ENCODE measurements at regions of chr1 and their contacts with region 1.

Region 1: DNA sequence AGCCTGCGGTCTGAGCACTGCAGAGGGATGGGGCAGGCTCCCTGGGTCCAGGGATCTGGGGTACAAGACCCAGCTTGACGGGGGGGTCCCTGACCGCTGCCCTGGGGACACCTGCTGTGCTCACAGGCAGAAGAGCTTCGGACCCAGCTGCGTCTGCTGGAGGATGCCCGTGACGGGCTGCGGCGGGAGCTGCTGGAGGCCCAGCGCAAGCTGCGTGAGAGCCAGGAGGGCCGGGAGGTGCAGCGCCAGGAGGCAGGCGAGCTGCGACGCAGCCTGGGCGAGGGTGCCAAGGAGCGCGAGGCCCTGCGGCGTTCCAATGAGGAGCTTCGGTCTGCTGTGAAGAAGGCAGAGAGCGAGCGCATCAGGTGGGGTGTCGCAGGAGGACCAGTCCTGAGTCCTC is 25.2 kb downstream of the MFAP2 start:
- DNase-seq: no peak
- ATAC-seq: no peak
- H3K4me3 ChIP-seq: no peak overlapping the region
- H3K27ac ChIP-seq: no peak overlapping the region
- H3K4me1 ChIP-seq: peaks cover 9% of the 10 kb centered on the region
- H3K27me3 ChIP-seq: no peaks in the 10 kb centered on the region
- CTCF ChIP-seq: no peak

Region 2: DNA sequence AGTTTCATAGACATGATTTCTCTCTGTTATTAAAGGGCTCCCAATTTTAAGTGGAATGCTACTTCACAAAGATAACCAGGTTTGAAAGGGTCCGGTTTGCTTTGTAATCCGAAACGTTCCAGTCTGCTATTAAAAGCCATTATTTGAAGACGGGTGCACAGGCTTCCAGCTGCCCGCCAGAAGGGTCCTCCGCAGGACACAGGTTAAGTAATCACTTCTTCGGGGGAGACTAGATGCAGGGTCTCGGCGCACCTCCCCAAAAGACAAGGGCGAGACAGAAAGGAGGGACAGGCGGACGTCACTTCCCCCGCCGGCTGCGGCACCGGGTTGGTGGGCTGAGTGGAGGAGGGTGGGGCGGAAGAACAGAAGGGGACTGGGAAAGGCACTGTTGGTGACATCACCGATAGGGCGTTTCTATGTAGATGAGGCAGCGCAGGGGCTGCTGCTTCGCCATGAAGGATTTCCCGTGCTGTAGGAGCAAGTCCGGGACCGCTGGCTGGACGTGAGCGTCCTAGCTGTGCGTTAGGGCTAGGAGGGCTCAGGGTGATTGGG is 50.5 kb before region 1 on chr1:
- CTCF ChIA-PET with region 1: no interaction called
- POLR2A ChIA-PET with region 1: no interaction called
- intact Hi-C with region 1: no loop called
- DNase-seq: peak; percentile 95
- ATAC-seq: peak; percentile 96
- H3K4me3 ChIP-seq: peak overlapping the region; percentile 83
- H3K27ac ChIP-seq: peak overlapping the region; percentile 97
- H3K4me1 ChIP-seq: peaks cover 16% of the 10 kb centered on the region; the same call in 1 of the 2 replicates
- H3K27me3 ChIP-seq: no peaks in the 10 kb centered on the region
- CTCF ChIP-seq: no peak

Region 3: DNA sequence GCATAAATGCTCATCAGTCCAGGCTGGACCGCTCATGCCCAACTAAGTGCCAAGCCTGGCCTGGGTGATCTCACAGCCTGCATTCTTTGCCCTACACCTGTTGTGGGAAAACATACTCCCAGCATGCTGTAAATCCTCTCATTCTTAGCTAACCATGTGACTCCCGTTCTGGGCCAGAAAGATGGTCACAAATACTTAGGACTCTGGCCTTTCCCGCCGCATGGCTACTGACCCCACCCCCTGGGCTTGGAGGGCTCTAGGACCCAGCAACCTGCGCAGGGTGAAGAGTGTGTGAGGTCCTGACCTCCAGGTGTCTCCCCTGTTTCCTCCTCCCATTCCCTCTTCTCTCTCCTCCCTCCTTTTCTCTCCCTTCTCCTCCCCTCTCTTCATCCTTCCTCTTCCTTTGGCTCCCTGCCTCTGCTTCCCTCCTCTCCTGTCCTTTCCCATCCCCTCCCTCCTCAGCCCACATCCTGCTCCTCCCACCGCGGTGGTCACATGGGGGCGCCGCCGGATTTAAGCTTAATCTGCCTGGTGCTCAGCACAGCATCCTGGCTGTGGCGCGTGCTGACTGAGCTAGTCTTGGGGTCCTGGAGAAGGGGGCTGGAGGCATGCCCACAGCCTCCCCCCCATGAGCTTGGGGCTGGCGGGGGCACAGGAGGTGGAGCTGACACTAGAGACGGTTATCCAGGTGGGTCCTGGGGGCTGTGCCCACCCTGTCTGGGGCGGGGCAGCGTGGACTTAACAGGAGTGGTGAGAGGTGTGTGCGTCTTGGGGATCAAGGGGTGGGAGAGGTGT is 33.6 kb before region 1 on chr1 and contains the start of gene CROCC:
- CTCF ChIA-PET with region 1: no interaction called
- POLR2A ChIA-PET with region 1: no interaction called
- intact Hi-C with region 1: no loop called
- DNase-seq: no peak
- ATAC-seq: no peak
- H3K4me3 ChIP-seq: no peak within 1 kb of the TSS
- H3K27ac ChIP-seq: no peak within 1 kb of the TSS
- H3K4me1 ChIP-seq: no peaks in the 10 kb centered on the region
- H3K27me3 ChIP-seq: no peaks in the 10 kb centered on the region
- CTCF ChIP-seq: no peak
- total RNA-seq, gene CROCC: 24.6 and 51.6 TPM in 2 replicates

Region 4: GRCh38 chr1:17028662-17029188 is 73.5 kb after region 1 on chr1:
- CTCF ChIA-PET with region 1: interaction called, 10 read pairs
- POLR2A ChIA-PET with region 1: no interaction called
- intact Hi-C with region 1: no loop called
- DNase-seq: no peak
- ATAC-seq: no peak
- H3K4me3 ChIP-seq: no peak overlapping the region
- H3K27ac ChIP-seq: no peak overlapping the region
- H3K4me1 ChIP-seq: no peaks in the 10 kb centered on the region
- H3K27me3 ChIP-seq: no peaks in the 10 kb centered on the region
- CTCF ChIP-seq: no peak

Measured in PC-3 (cell line).